Activated T-helper 1 cell treated with anti-CD3 and anti-CD28 coated beads, Interleukin-12 subunit alpha, Interleukin-12 subunit beta, Interleukin-2, Interleukin-4 antibody, amounts not matched to agents 30 ng/mL and 10 ng/mL and 1 ng/mL, durations not matched to agents 14 hours and 24 hours and 36 hours (primary cell): ENCODE measurements at regions of chr4 and their contacts with region 1.

Region 1: GRCh38 chr4:100093091-100093866 is 97.0 kb downstream of the DDIT4L start:
- DNase-seq: peak; percentile 75
- H3K4me3 Mint-ChIP-seq: no peak overlapping the region
- H3K27ac Mint-ChIP-seq: peak overlapping the region; percentile 81
- H3K4me1 Mint-ChIP-seq: peaks cover 56% of the 10 kb centered on the region
- H3K27me3 Mint-ChIP-seq: no peaks in the 10 kb centered on the region

Region 2: GRCh38 chr4:99949034-99949998 is 144.0 kb before region 1 on chr4:
- intact Hi-C with region 1: loop called (anchors 1 kb)
- DNase-seq: peak; percentile 82
- H3K4me3 Mint-ChIP-seq: no peak overlapping the region
- H3K27ac Mint-ChIP-seq: no peak overlapping the region
- H3K4me1 Mint-ChIP-seq: peaks cover 30% of the 10 kb centered on the region
- H3K27me3 Mint-ChIP-seq: no peaks in the 10 kb centered on the region

Region 3: GRCh38 chr4:100130491-100130890 is 37.2 kb after region 1 on chr4:
- intact Hi-C with region 1: no loop called
- DNase-seq: no peak
- H3K4me3 Mint-ChIP-seq: no peak overlapping the region
- H3K27ac Mint-ChIP-seq: no peak overlapping the region
- H3K4me1 Mint-ChIP-seq: no peaks in the 10 kb centered on the region
- H3K27me3 Mint-ChIP-seq: peaks cover 9% of the 10 kb centered on the region

Region 4: GRCh38 chr4:100208964-100209363 is 115.7 kb after region 1 on chr4:
- intact Hi-C with region 1: loop called (anchors 5 kb)
- DNase-seq: peak; percentile 29
- H3K4me3 Mint-ChIP-seq: peak overlapping the region; percentile 17
- H3K27ac Mint-ChIP-seq: peak overlapping the region; percentile 59
- H3K4me1 Mint-ChIP-seq: peaks cover 32% of the 10 kb centered on the region
- H3K27me3 Mint-ChIP-seq: peaks cover 24% of the 10 kb centered on the region

Region 5: DNA sequence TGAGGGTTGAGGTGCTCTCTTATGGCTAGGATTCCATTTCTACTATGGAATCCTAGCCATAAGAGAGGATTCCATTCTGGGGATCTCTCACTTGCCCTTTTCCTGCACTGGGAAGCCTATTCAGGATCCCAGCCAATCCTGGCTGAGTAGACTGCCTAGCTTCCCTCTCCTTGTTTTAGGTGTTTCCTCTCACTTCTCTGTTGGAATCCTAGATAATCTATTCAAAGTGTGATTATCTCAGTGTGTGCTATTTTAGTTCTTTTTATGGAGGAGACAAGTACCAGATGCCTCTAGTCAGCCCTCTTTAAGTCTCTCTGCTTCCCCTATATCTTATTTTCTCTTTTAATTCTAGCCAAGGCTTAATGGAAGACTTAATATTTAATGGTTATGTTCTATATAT is 131.4 kb after region 1 on chr4:
- intact Hi-C with region 1: no loop called
- DNase-seq: no peak
- H3K4me3 Mint-ChIP-seq: no peak overlapping the region
- H3K27ac Mint-ChIP-seq: no peak overlapping the region
- H3K4me1 Mint-ChIP-seq: no peaks in the 10 kb centered on the region
- H3K27me3 Mint-ChIP-seq: peaks cover 8% of the 10 kb centered on the region

Region 6: DNA sequence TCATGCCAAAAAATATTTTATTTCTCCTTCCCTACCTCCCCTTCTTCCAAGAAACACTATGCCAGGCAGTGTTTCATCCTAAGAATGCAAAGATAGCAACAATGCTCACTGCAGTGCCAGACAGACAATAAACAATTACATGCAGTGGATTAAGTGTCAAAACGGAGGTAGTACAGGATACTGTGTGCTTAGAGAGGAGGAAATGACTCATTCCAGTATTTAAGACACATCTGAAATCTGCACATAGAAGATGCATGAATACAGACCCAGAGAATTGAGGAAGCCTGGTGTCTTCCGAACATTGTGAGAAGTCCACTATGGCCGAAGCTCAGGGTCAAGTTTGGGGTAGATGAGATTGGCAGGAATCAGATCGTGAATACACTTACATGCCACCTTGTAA is 927.7 kb after region 1 on chr4:
- intact Hi-C with region 1: loop called (anchors 2 kb)
- DNase-seq: peak; percentile 16
- H3K4me3 Mint-ChIP-seq: peak overlapping the region; percentile 43
- H3K27ac Mint-ChIP-seq: peak overlapping the region; percentile 67
- H3K4me1 Mint-ChIP-seq: peaks cover 62% of the 10 kb centered on the region
- H3K27me3 Mint-ChIP-seq: no peaks in the 10 kb centered on the region

Region 7: DNA sequence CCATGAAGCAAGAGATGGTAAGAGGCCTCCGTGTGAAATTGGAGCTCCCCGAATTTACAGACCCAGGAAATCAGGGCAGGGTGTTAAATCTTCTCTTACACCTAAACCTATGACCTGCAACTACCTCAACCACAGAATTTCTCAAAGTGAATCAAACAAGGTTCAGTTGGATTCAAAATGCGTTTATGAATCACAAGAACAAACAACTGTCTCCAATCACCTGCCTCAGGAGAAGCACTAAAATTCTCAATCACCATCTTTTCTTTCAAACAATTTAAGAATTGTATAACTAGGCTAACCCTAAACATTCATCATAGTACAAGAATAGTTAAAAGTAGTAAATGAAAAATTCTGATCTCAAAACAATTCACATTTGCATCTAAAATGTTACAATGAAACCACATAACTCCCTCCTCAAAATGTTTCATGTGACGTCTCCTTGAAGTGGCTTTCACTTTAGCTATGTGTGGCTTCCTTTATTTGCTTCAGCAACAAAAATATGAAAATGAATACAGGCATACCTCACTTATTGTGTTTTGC is 1234.9 kb after region 1 on chr4:
- intact Hi-C with region 1: loop called (anchors 1 kb)
- DNase-seq: peak; percentile 21
- H3K4me3 Mint-ChIP-seq: peak overlapping the region; percentile 45
- H3K27ac Mint-ChIP-seq: peak overlapping the region; percentile 81
- H3K4me1 Mint-ChIP-seq: peaks cover 31% of the 10 kb centered on the region
- H3K27me3 Mint-ChIP-seq: peaks cover 24% of the 10 kb centered on the region

Region 8: GRCh38 chr4:101730291-101731117 is 1637.2 kb after region 1 on chr4:
- intact Hi-C with region 1: loop called (anchors 2 kb)
- DNase-seq: peak; percentile 10
- H3K4me3 Mint-ChIP-seq: no peak overlapping the region
- H3K27ac Mint-ChIP-seq: no peak overlapping the region
- H3K4me1 Mint-ChIP-seq: no peaks in the 10 kb centered on the region
- H3K27me3 Mint-ChIP-seq: peaks cover 7% of the 10 kb centered on the region